ENCODE measurements at regions of chr4 and their contacts with region 1.

Region 1: DNA sequence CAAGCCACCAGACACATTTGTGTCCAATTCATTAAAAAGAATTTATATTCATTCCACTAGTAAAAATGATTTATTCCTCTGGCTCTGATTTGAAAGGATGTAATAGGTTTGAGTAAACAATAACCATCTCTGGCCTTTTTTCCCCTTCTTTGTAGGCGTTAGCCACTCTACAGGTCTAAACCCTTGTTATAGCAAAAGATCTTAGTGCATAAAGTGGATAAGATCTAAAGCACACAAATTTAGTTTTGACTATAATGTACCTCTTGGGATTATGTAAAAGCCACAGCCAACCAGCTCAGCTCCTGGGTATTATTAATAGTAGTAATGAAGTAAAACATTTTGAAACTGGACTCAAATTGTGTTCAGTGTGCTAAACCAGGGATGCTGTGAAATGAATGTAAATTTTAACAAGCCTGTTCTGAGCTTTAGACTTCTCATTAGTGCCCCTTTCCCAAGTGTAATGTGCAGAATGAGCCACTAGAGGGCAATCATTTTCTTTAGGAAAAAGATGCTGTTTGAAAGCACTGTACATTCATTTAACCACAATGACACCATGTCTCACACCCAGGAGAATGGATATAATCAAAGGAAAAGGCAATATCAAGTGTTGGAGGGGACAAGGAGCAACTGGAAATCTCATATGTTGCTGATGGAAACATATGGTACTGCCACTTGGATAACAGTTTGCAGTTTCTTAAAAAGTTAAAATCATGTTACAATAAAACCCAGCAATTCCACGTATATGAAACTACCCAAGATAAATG is 69.7 kb downstream of the KLHL8 start:
- DNase-seq: peak; percentile 87
- H3K4me3 ChIP-seq: no peak overlapping the region
- H3K27ac ChIP-seq: no peak overlapping the region
- H3K4me1 ChIP-seq: no peaks in the 10 kb centered on the region
- H3K27me3 ChIP-seq: no peaks in the 10 kb centered on the region
- CTCF ChIP-seq: peak; percentile 62 to 68
- POLR2A ChIP-seq: no peak

Region 2: DNA sequence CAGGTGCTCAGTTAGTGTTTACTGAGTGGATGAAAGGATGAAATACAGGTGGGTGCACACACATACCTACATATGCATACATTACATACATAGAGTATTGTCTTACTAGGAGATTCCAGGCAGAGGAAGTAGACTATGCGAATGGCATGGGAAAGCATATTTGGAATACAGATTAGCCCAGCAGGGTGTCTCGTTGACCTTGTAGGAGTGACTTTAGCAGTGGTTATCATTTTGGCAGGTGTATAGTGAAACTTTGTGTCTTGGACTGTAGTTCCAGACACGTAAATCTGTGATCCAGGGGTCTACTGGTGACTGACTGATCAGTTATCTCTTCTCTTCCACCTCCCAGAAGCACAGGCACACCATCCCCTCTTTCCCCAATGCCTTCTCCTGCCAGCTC is 16.6 kb before region 1 on chr4:
- CTCF ChIA-PET with region 1: interaction called, 15 read pairs
- POLR2A ChIA-PET with region 1: no interaction called
- dilution Hi-C with region 1: no loop called
- intact Hi-C with region 1: no loop called
- DNase-seq: no peak
- H3K4me3 ChIP-seq: no peak overlapping the region
- H3K27ac ChIP-seq: no peak overlapping the region
- H3K4me1 ChIP-seq: no peaks in the 10 kb centered on the region
- H3K27me3 ChIP-seq: no peaks in the 10 kb centered on the region
- CTCF ChIP-seq: no peak
- POLR2A ChIP-seq: no peak

Region 3: GRCh38 chr4:87171944-87172343 is 21.3 kb after region 1 on chr4:
- CTCF ChIA-PET with region 1: interaction called, 12 read pairs
- POLR2A ChIA-PET with region 1: no interaction called
- dilution Hi-C with region 1: no loop called
- intact Hi-C with region 1: no loop called
- DNase-seq: no peak
- H3K4me3 ChIP-seq: no peak overlapping the region
- H3K27ac ChIP-seq: no peak overlapping the region
- H3K4me1 ChIP-seq: no peaks in the 10 kb centered on the region
- H3K27me3 ChIP-seq: no peaks in the 10 kb centered on the region
- CTCF ChIP-seq: no peak
- POLR2A ChIP-seq: no peak

Region 4: GRCh38 chr4:87235020-87235671 is 84.5 kb after region 1 on chr4:
- CTCF ChIA-PET with region 1: interaction called, 71 read pairs
- POLR2A ChIA-PET with region 1: no interaction called
- dilution Hi-C with region 1: no loop called
- intact Hi-C with region 1: loop called (anchors 1 kb)
- DNase-seq: no peak
- H3K4me3 ChIP-seq: peak overlapping the region in 2 of 3 experiments; percentile 74 to 96
- H3K27ac ChIP-seq: no peak overlapping the region
- H3K4me1 ChIP-seq: peaks cover 2% of the 10 kb centered on the region
- H3K27me3 ChIP-seq: peaks cover 0 to 6% of the 10 kb centered on the region in 2 experiments
- CTCF ChIP-seq: no peak
- POLR2A ChIP-seq: no peak

Region 5: DNA sequence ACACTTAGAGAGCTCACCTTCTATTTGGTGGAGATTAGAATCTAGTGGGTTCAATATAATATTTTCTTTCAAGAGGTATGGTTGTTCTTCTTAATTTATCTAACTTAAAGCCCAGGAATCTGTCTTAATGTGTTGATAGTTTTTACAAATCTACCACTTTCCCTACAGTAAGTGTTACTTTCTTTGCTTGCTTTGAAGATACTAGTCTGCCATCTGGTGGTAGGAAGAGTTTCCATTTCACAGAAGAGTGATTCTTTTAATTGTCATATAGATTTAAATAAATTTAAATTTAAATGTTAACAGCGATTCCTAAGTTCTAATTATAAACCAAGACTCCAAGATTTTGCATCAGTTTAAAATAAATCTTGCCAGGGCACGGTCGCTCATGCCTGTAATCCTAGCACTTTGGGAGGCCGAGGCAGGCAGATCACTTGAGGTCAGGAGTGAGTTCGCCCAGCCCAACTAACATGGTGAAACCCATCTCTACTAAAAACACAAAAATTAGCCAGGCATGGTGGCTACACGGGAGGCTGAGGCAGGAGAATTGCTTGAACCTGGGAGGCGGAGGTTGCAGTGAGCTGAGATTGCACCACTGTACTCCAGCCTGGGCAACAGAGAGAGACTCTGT is 315.2 kb after region 1 on chr4:
- CTCF ChIA-PET with region 1: interaction called, 18 read pairs
- POLR2A ChIA-PET with region 1: no interaction called
- dilution Hi-C with region 1: no loop called
- intact Hi-C with region 1: loop called (anchors 5 kb)
- DNase-seq: peak; percentile 53
- H3K4me3 ChIP-seq: no peak overlapping the region
- H3K27ac ChIP-seq: no peak overlapping the region
- H3K4me1 ChIP-seq: no peaks in the 10 kb centered on the region
- H3K27me3 ChIP-seq: no peaks in the 10 kb centered on the region
- CTCF ChIP-seq: peak; percentile 18 to 30
- POLR2A ChIP-seq: no peak

Region 6: DNA sequence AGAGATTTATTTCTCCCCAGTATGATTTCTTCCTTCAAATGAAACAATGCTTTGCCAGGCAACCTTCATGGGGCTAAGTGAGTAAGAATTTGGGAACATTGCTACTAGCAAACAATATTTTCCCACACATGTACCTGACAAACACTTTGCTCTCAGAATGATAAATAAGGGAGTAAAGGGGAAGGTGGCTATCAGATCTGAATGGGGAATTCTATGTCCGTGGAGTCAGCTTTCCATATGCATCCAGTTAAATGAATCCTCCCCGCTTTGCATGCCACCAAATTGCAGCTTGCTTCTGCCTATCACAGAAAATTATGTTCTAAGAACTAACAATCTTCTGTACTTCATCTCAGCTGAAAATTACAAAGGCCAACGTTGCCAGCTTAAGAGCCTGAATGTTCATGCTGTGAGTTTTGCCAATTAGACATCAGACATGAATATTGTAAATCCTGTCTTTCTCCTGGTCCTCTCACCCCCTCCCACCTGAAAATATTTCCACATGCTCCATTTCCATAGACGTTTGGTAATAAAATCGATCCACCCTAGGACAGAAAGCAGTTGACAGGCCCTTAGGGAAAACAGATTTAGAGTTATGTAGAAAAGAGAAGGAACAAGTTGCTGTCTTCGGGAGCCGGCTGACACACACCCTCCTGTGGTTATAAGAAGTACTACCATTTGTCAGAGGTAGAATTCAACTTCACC is 688.4 kb after region 1 on chr4:
- CTCF ChIA-PET with region 1: no interaction called
- POLR2A ChIA-PET with region 1: no interaction called
- dilution Hi-C with region 1: no loop called
- intact Hi-C with region 1: no loop called
- DNase-seq: peak; percentile 38
- H3K4me3 ChIP-seq: no peak overlapping the region
- H3K27ac ChIP-seq: no peak overlapping the region
- H3K4me1 ChIP-seq: peaks cover 4% of the 10 kb centered on the region
- H3K27me3 ChIP-seq: peaks cover 3 to 7% of the 10 kb centered on the region in 2 experiments
- CTCF ChIP-seq: peak; percentile 24 to 53
- POLR2A ChIP-seq: no peak

Measured in endothelial cell of umbilical vein (primary cell).